Common myeloid progenitor, CD34-positive (primary cell): ENCODE measurements at regions of chr4 and their contacts with region 1.

Region 1: GRCh38 chr4:24557026-24558025 is 27.0 kb downstream of the DHX15 start:
- DNase-seq: peak; percentile 20 to 68 (median 59)
- H3K4me3 ChIP-seq: no peak overlapping the region
- H3K27ac ChIP-seq: no peak overlapping the region
- H3K4me1 ChIP-seq: peaks cover 3 to 9% (median 6%) of the 10 kb centered on the region in 4 experiments
- H3K27me3 ChIP-seq: no peaks in the 10 kb centered on the region

Region 2: GRCh38 chr4:24568425-24568824 is 11.1 kb after region 1 on chr4:
- CTCF ChIA-PET with region 1: interaction called, 40 read pairs
- POLR2A ChIA-PET with region 1: no interaction called
- DNase-seq: no peak
- H3K4me3 ChIP-seq: no peak overlapping the region
- H3K27ac ChIP-seq: no peak overlapping the region
- H3K4me1 ChIP-seq: peaks cover 0 to 9% (median 0%) of the 10 kb centered on the region in 4 experiments
- H3K27me3 ChIP-seq: no peaks in the 10 kb centered on the region

Region 3: DNA sequence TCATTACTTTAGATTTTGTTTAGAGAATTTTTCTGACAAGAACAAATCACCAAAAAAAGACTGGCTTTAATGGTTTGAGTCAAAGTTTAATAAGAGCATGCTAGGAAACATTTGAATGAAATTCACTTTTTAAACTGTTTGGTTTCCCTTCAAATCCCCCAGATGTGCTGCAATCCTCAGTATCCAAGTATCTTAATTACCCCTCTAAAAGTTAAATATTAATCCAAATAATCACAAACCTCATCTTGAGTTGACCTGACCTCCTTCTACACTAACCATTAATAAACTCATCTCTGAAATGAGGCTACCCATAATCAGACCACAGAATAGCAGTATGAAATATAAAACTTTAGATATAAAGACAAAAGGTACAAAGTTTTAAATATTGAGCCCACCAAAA is 16.9 kb after region 1 on chr4:
- CTCF ChIA-PET with region 1: interaction called, 40 read pairs
- POLR2A ChIA-PET with region 1: interaction called, 6 read pairs
- DNase-seq: no peak
- H3K4me3 ChIP-seq: no peak overlapping the region
- H3K27ac ChIP-seq: no peak overlapping the region
- H3K4me1 ChIP-seq: peaks cover 0 to 18% (median 5%) of the 10 kb centered on the region in 4 experiments
- H3K27me3 ChIP-seq: no peaks in the 10 kb centered on the region